K562 (cell line): ENCODE measurements at regions of chr2 and their contacts with region 1.

Region 1: DNA sequence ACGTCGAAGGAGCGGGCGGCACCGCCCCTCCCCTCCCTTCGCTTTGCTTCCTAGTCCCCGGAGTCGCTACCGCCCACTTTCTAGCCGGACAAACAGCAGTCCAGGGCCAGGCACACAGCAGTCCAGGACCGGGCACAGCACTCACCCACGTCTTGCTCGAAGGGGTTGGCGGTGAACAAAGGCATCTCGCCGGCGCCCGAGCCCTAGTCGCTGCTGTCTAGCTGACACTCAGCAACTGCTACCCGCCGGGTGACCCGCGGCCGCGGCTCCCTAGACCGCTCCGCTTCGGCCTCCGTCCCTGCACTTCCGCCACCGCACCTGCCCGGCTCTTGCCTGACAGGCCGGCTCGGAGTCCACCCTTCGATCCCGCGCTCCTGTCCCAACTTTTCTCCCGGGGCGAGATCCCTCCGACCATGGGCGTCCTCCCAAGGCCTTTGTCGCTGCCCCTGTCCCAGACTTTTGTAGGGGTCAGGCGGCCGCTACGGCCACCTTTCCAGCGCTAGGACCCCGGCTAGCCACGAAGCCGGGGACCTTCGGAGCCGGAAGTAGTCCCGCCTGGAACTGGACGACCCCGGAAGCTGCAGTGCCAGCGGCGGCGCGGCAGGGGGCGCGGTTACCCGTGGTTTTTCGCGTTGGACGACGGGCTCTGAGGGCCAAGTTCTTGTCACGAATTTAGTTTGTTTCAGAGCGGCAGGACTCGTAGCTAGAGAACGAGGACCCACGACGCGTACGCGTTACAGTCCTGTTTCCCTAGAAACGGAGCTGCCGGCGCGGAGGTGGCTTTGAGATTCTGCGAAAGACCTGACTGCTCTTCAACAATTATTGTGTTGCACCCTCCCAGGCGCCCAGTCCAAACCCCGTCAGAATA is at the start of gene STAM2:
- DNase-seq: peak; percentile 94 to 96 (median 94)
- ATAC-seq: peak; percentile 97
- H3K4me3 ChIP-seq: peak within 1 kb of the TSS; percentile 80
- H3K27ac ChIP-seq: peak within 1 kb of the TSS; percentile 97
- H3K4me1 ChIP-seq: peaks cover 5 to 11% of the 10 kb centered on the region in 2 experiments; a peak in 4 of 5 replicates
- H3K27me3 ChIP-seq: no peaks in the 10 kb centered on the region; a peak in 1 of 5 replicates
- CTCF ChIP-seq: peak; percentile 91 to 98 (median 97)
- EP300 ChIP-seq: peak; percentile 45
- POLR2A ChIP-seq: peak; percentile 98
- RAD21 ChIP-seq: peak; percentile 83 to 84
- polyA plus RNA-seq, gene STAM2: 4.5 to 5.4 TPM

Region 2: DNA sequence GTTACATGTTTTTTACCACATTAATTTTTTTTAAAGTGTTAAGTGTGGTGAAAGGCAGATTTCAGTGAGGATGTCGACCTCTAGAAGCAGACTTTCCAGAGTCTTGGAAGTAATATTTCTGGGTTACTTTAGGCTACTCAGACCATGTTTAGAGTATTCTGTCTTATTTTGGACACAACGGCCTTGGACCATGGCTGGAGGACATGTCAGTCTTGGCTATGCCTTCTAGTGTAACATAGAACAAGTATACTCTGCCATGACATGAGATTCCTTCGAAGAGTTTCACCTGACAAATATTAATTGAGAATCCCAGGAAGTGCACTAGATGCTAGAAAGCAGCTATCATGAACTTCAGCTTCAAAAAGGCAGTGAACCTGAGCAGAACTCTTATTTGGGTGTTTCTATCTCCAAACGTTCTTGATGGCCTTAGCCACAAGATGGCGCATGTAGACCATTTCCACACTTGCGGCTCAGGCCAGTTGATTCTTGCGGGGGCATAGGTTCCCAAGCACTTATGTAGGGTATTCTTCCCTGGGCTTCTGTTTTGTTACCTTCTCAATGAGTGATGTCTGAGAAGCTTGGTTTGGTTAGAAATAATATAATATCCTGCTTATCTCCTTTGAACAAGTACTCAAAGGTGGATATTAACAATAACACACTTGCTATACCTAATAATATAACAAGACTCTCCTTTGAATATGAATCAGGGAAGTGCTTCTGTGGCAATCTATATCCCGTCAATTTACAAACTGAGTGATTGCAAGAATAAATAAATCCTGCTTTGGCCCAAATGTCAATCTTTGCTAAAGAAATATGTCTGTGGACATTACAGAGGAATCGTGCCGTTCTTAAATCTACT is 138.9 kb before region 1 on chr2:
- CTCF ChIA-PET with region 1: interaction called, 4 read pairs
- POLR2A ChIA-PET with region 1: no interaction called
- in situ Hi-C with region 1: no loop called
- intact Hi-C with region 1: loop called (anchors 1 kb)
- DNase-seq: peak; percentile 58 to 84 (median 66)
- ATAC-seq: peak; percentile 93
- H3K4me3 ChIP-seq: no peak overlapping the region
- H3K27ac ChIP-seq: no peak overlapping the region
- H3K4me1 ChIP-seq: no peaks in the 10 kb centered on the region
- H3K27me3 ChIP-seq: peaks cover 13 to 41% of the 10 kb centered on the region in 2 experiments; a peak in 4 of 5 replicates
- CTCF ChIP-seq: peak; percentile 83 to 93 (median 86)
- EP300 ChIP-seq: no peak
- POLR2A ChIP-seq: no peak
- RAD21 ChIP-seq: peak; percentile 97

Region 3: GRCh38 chr2:152134488-152135280 is 41.0 kb before region 1 on chr2:
- CTCF ChIA-PET with region 1: no interaction called
- POLR2A ChIA-PET with region 1: no interaction called
- in situ Hi-C with region 1: no loop called
- intact Hi-C with region 1: loop called (anchors 2 kb)
- DNase-seq: peak in 2 of 4 experiments; percentile 54 to 62
- ATAC-seq: peak; percentile 92
- H3K4me3 ChIP-seq: no peak overlapping the region
- H3K27ac ChIP-seq: no peak overlapping the region
- H3K4me1 ChIP-seq: no peaks in the 10 kb centered on the region; a peak in 1 of 5 replicates
- H3K27me3 ChIP-seq: no peaks in the 10 kb centered on the region
- CTCF ChIP-seq: no peak
- EP300 ChIP-seq: peak; percentile 43
- POLR2A ChIP-seq: no peak
- RAD21 ChIP-seq: no peak; a peak in 1 of 4 replicates

Region 4: GRCh38 chr2:152227969-152228592 is 52.4 kb after region 1 on chr2:
- CTCF ChIA-PET with region 1: no interaction called
- POLR2A ChIA-PET with region 1: no interaction called
- in situ Hi-C with region 1: no loop called
- intact Hi-C with region 1: no loop called
- DNase-seq: no peak
- ATAC-seq: no peak
- H3K4me3 ChIP-seq: no peak overlapping the region
- H3K27ac ChIP-seq: no peak overlapping the region
- H3K4me1 ChIP-seq: no peaks in the 10 kb centered on the region
- H3K27me3 ChIP-seq: peaks cover 2 to 9% of the 10 kb centered on the region in 2 experiments; a peak in 2 of 5 replicates
- CTCF ChIP-seq: no peak
- EP300 ChIP-seq: no peak
- POLR2A ChIP-seq: no peak
- RAD21 ChIP-seq: no peak

Region 5: DNA sequence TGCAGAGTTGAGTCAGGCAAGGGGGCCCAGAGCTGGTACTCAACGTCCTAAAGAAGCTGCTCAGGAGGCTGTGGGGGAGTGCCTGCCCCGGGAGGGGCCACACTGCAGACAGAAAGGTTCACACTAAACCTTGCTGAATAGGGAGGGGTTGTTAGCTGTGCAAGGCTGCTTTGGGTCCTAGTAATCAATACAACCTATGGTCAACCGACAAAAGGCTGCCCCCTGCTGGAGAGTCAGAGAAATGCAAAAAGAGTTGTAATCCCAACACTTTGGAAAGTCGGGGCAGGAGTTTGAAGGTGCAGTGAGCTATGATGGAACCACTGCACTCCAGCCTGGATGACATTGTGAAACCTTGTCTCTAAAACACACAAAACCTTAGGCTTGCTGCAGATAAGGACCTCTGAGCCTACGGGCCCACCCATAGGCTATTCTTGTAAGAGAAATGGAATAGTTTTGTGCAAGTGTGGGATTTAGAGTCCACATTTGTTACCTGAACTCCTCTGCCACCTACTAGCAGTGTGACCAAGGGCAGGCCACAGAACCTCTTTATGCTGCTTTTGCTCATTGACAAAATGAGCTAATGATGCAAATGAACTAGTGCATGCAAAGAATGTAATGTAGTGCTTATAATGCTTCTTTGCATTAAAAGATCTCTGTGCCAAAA is 460.1 kb after region 1 on chr2:
- CTCF ChIA-PET with region 1: no interaction called
- POLR2A ChIA-PET with region 1: no interaction called
- in situ Hi-C with region 1: no loop called
- intact Hi-C with region 1: loop called (anchors 5 kb)
- DNase-seq: peak; percentile 73 to 84 (median 78)
- ATAC-seq: peak; percentile 84
- H3K4me3 ChIP-seq: no peak overlapping the region
- H3K27ac ChIP-seq: no peak overlapping the region
- H3K4me1 ChIP-seq: no peaks in the 10 kb centered on the region
- H3K27me3 ChIP-seq: peaks cover 10 to 18% of the 10 kb centered on the region in 2 experiments; a peak in 3 of 5 replicates
- CTCF ChIP-seq: peak; percentile 74 to 85 (median 84)
- EP300 ChIP-seq: no peak
- POLR2A ChIP-seq: no peak
- RAD21 ChIP-seq: peak; percentile 82 to 89

Region 6: DNA sequence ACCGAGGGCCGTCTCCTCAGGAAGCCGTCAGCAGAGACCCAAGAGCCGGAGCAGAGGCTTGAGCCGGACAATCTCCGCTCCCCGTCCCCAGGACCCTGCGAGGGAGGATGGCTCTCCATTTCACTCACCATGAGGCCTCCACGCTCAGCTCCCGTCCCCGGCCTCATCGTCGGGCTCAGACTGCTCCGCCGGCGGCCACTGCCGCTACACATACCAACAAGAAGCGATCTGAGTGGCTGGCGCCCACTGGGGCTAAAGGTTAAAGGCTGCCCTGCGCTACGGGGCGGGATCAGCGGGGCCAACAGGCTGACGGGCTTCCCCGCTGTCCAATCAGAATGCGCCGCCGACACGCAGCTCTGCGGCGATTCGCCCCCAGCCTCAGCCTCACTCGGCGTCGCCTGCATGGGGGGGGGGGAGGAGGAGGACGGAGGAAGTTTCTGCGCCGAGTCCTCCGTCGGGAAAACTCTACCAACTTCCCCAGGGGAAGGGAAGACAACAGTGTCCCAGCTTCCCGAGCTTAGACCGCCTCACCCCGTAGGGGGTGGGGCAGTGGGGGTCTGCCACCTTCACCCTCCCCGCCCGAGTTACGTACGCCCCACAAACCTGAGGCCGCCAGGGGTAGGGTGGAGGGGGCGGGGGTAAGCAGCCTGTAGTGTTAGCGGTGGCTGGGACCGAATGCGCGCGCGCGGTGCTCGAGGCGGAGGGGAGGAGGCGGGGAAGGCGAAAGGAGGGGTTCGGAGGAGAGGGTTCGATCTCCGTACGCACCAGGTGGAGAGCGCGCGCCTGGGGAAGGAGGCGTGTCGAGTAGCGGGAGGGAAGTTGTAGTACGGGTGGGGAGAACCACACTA is 541.8 kb after region 1 on chr2 and contains the start of gene PRPF40A:
- CTCF ChIA-PET with region 1: no interaction called
- POLR2A ChIA-PET with region 1: no interaction called
- in situ Hi-C with region 1: no loop called
- intact Hi-C with region 1: loop called (anchors 5 kb)
- DNase-seq: peak; percentile 99 to 100 (median 100)
- ATAC-seq: peak; percentile 83
- H3K4me3 ChIP-seq: peak within 1 kb of the TSS; percentile 79
- H3K27ac ChIP-seq: peak within 1 kb of the TSS; percentile 98
- H3K4me1 ChIP-seq: peaks cover 3 to 16% of the 10 kb centered on the region in 2 experiments; a peak in 2 of 5 replicates
- H3K27me3 ChIP-seq: no peaks in the 10 kb centered on the region
- CTCF ChIP-seq: no peak
- EP300 ChIP-seq: no peak
- POLR2A ChIP-seq: peak; percentile 94
- RAD21 ChIP-seq: no peak
- polyA plus RNA-seq, gene PRPF40A: 168 to 190 TPM